ENCODE measurements at regions of chr3 and their contacts with region 1.

Region 1: GRCh38 chr3:102229062-102229655 is 205.7 kb upstream of the ZPLD1 start:
- DNase-seq: no peak
- H3K4me3 ChIP-seq: no peak overlapping the region
- CTCF ChIP-seq: peak; percentile 83

Region 2: GRCh38 chr3:101819758-101820157 is 409.4 kb before region 1 on chr3:
- CTCF ChIA-PET with region 1: interaction called, 1,077 read pairs
- POLR2A ChIA-PET with region 1: no interaction called
- DNase-seq: no peak
- H3K4me3 ChIP-seq: no peak overlapping the region
- CTCF ChIP-seq: no peak

Region 3: DNA sequence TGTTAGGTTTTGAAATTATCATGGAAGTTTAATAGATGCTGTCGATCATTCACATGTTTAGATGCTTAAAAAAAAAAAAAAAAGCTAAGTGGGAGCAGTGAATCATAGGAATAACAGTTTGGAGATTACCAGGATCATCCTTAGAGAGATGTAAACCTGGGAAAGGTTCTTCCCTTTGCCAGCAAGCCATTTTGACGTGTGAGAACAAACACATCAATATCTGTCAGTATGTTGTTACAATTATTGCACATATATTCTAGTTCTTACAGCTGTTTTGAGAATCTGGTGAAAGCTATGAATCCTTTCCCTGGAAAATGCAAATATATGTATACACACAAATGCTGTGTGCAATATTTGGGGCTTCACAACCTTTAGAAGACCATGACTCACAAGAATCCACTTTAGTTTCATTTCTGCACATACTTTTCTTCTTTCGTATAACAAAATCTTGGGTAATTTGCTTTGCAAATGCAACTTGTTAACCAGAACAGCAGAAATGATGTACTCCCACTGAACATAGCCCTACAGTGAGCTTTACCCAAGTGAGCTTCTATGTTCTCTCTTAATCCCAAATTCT is 367.9 kb before region 1 on chr3:
- CTCF ChIA-PET with region 1: interaction called, 25 read pairs
- POLR2A ChIA-PET with region 1: interaction called, 5 read pairs
- DNase-seq: no peak
- H3K4me3 ChIP-seq: no peak overlapping the region
- CTCF ChIP-seq: no peak

Region 4: DNA sequence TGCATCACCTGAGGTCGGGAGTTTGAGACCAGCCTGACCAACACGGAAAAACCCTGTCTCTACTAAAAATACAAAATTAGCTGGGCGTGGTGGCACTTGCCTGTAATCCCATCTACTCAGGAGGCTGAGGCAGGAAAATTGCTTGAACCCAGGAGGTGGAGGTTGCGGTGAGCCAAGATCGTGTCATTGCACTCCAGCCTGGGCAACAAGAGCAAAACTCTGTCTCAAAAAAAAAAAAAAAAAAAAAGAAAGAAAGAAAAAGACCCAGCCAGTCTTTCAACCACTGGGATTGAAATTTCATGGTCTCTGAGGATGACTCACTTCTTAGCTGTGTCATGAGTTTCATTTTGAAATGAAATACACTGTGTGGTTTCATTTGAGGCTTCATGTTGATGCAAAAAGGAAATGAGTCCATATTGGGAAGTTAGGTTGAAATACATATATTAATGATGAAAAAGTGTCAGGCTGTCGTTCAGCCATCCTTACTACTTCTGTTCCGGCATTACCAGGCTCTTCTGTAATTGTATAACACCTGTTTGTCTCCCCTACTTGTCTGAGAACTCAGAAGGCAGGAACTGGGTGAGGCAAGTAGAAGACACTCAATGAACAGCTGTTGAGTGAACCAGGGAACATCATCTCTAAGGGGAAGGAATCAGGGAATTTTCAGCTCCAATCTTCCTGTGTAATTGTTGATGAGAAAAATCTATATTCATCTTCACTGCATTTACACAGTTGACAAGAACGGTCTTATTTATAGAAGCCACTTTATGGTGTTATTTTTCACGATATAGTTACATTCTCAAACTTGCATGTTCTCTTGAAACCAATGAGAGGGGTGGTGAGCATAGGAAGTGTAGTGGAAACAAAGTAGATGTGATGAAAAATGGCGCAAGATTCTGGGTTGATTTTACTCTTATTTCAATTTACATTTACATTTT is 292.5 kb before region 1 on chr3:
- CTCF ChIA-PET with region 1: interaction called, 14 read pairs
- POLR2A ChIA-PET with region 1: no interaction called
- DNase-seq: peak; percentile 69
- H3K4me3 ChIP-seq: no peak overlapping the region
- CTCF ChIP-seq: no peak

Region 5: GRCh38 chr3:102206511-102207031 is 22.6 kb before region 1 on chr3:
- CTCF ChIA-PET with region 1: interaction called, 25 read pairs
- POLR2A ChIA-PET with region 1: no interaction called
- DNase-seq: peak; percentile 71
- H3K4me3 ChIP-seq: 0 out of 2 replicates have a peak overlapping the region, but pooled peaks have one; percentile 4
- CTCF ChIP-seq: no peak

Region 6: DNA sequence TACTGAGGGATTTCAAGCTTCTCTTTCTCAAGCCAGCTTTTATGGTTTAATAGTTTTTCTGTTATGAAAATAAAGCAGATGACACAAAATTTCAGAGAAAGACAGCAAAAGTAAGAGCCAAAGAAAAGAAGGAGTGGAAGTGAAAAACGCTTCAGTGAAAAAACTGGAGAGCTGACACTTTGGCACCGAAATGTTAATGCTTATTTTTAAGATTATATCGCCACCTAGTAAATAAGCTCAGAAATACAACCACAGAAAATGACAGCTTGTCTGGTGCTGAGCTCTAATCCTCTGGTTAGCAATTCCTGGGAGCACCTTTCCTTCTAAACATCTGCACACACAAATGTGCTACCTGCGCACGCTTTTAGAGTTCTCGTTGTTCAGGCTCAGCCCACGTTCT is 307.3 kb after region 1 on chr3:
- CTCF ChIA-PET with region 1: interaction called, 214 read pairs
- POLR2A ChIA-PET with region 1: no interaction called
- DNase-seq: no peak
- H3K4me3 ChIP-seq: no peak overlapping the region
- CTCF ChIP-seq: peak; percentile 19

Measured in AG04449 (cell line).